HEK293 (cell line): ENCODE measurements at regions of chr1 and their contacts with region 1.

Region 1: GRCh38 chr1:30379684-30380624 is 343.4 kb downstream of the MATN1 start:
- H3K4me3 ChIP-seq: no peak overlapping the region
- H3K27ac ChIP-seq: no peak overlapping the region
- H3K4me1 ChIP-seq: no peaks in the 10 kb centered on the region
- CTCF ChIP-seq: peak; percentile 76

Region 2: GRCh38 chr1:30345578-30346039 is 34.3 kb before region 1 on chr1:
- CTCF ChIA-PET with region 1: interaction called, 11 read pairs
- POLR2A ChIA-PET with region 1: no interaction called
- H3K4me3 ChIP-seq: no peak overlapping the region
- H3K27ac ChIP-seq: no peak overlapping the region
- H3K4me1 ChIP-seq: peaks cover 6% of the 10 kb centered on the region
- CTCF ChIP-seq: no peak

Region 3: DNA sequence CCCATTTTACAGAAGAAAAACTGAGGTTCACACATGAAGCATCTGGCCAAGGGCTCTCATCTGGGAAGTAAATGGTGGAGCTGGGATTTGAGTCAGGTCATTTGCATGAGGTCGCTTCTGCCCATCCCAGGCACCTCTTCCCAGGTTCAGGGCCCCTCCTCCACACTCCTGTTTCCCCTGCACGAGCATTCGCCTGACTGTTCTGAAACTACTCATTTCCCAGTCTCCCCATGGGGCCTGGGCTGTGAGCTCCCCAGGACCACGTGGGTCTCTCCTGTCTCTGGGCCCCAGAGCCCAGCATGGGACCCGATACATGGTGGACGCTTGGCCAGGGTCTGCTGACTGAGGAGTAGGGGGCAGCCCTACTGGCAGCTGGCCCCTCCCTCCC is 17.4 kb before region 1 on chr1:
- CTCF ChIA-PET with region 1: interaction called, 26 read pairs
- POLR2A ChIA-PET with region 1: no interaction called
- H3K4me3 ChIP-seq: no peak overlapping the region
- H3K27ac ChIP-seq: no peak overlapping the region
- H3K4me1 ChIP-seq: no peaks in the 10 kb centered on the region
- CTCF ChIP-seq: no peak

Region 4: GRCh38 chr1:30395631-30396030 is 15.7 kb after region 1 on chr1:
- CTCF ChIA-PET with region 1: interaction called, 19 read pairs
- POLR2A ChIA-PET with region 1: no interaction called
- H3K4me3 ChIP-seq: no peak overlapping the region
- H3K27ac ChIP-seq: no peak overlapping the region
- H3K4me1 ChIP-seq: no peaks in the 10 kb centered on the region
- CTCF ChIP-seq: no peak